ENCODE measurements at regions of chr10 and their contacts with region 1.

Region 1: GRCh38 chr10:24408365-24408764 is 199.4 kb downstream of the KIAA1217 start:
- DNase-seq: no peak
- ATAC-seq: no peak
- H3K4me3 ChIP-seq: no peak overlapping the region
- H3K27ac ChIP-seq: no peak overlapping the region
- H3K4me1 ChIP-seq: no peaks in the 10 kb centered on the region
- H3K27me3 ChIP-seq: no peaks in the 10 kb centered on the region
- CTCF ChIP-seq: no peak

Region 2: DNA sequence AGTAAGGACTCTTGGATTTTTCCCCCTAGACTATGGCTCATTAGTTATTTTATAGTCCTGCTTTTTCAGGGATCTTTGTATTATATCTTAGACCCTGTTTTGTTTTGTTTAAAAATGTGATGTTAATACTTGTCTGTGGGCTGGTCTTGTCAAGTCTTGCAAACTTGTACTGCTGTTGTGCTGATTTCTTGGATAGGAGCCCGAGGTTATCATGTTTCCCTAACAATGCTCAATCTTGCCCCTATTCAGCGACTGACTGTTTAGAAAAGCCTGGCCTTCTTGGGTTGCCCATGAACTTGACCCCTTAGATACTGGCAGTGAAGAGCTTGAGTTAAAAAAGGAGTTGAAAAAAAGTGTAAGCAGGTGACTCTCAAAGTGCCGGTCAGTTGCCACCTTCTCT is 83.7 kb before region 1 on chr10:
- CTCF ChIA-PET with region 1: no interaction called
- POLR2A ChIA-PET with region 1: no interaction called
- in situ Hi-C with region 1: no loop called
- intact Hi-C with region 1: no loop called
- DNase-seq: no peak
- ATAC-seq: no peak
- H3K4me3 ChIP-seq: no peak overlapping the region
- H3K27ac ChIP-seq: no peak overlapping the region
- H3K4me1 ChIP-seq: no peaks in the 10 kb centered on the region
- H3K27me3 ChIP-seq: no peaks in the 10 kb centered on the region
- CTCF ChIP-seq: no peak

Region 3: GRCh38 chr10:24393201-24393600 is 15.2 kb before region 1 on chr10:
- CTCF ChIA-PET with region 1: no interaction called
- POLR2A ChIA-PET with region 1: no interaction called
- in situ Hi-C with region 1: no loop called
- intact Hi-C with region 1: no loop called
- DNase-seq: no peak
- ATAC-seq: no peak
- H3K4me3 ChIP-seq: no peak overlapping the region
- H3K27ac ChIP-seq: no peak overlapping the region
- H3K4me1 ChIP-seq: no peaks in the 10 kb centered on the region
- H3K27me3 ChIP-seq: no peaks in the 10 kb centered on the region
- CTCF ChIP-seq: no peak

Region 4: DNA sequence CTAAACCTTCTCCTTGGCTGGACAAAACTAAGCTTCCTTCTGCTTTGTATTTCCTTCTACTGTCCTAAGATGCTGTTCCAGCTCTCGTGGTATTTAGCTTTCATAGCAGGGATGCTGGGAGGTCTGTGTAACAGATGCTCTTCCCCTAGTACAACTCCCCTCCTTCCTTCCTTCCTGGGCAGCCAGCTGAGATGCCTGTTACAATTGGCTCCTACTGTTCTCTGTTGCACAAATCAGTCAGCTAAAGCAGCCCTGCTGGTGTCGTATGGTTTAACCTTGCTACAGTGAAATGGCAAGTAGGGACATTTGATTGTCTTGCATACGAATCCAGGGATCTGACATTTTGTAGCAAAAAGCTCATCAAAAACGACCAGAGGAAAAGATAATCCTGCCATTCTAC is 171.5 kb after region 1 on chr10:
- CTCF ChIA-PET with region 1: no interaction called
- POLR2A ChIA-PET with region 1: no interaction called
- in situ Hi-C with region 1: no loop called
- intact Hi-C with region 1: no loop called
- DNase-seq: no peak
- ATAC-seq: no peak
- H3K4me3 ChIP-seq: no peak overlapping the region
- H3K27ac ChIP-seq: no peak overlapping the region
- H3K4me1 ChIP-seq: no peaks in the 10 kb centered on the region
- H3K27me3 ChIP-seq: no peaks in the 10 kb centered on the region
- CTCF ChIP-seq: no peak

Region 5: GRCh38 chr10:24690961-24691512 is 282.7 kb after region 1 on chr10:
- CTCF ChIA-PET with region 1: no interaction called
- POLR2A ChIA-PET with region 1: no interaction called
- in situ Hi-C with region 1: no loop called
- intact Hi-C with region 1: no loop called
- DNase-seq: no peak
- ATAC-seq: no peak
- H3K4me3 ChIP-seq: no peak overlapping the region
- H3K27ac ChIP-seq: no peak overlapping the region
- H3K4me1 ChIP-seq: no peaks in the 10 kb centered on the region
- H3K27me3 ChIP-seq: no peaks in the 10 kb centered on the region
- CTCF ChIP-seq: no peak

Region 6: DNA sequence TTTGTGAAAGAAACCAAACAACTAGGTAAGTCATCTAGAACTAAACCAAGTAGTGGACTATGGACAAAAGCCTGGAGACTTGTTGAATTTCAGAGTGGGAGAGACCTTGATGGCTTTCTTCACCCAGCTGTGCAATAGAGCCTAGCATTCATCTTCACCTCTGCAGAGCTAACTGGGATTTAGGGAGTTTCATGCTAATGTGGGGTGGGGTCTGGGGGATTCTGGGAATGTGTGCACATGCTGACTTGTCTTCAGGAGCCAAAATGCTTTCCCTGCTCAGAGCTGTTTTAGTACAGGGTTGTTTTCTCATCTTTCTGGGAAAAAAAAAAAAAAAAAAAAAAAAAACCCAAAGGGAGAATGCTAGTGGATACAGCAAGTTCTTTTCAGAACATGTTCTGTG is 396.6 kb after region 1 on chr10:
- CTCF ChIA-PET with region 1: no interaction called
- POLR2A ChIA-PET with region 1: interaction called, 21 read pairs
- in situ Hi-C with region 1: no loop called
- intact Hi-C with region 1: no loop called
- DNase-seq: no peak
- ATAC-seq: no peak
- H3K4me3 ChIP-seq: no peak overlapping the region
- H3K27ac ChIP-seq: no peak overlapping the region
- H3K4me1 ChIP-seq: no peaks in the 10 kb centered on the region
- H3K27me3 ChIP-seq: no peaks in the 10 kb centered on the region
- CTCF ChIP-seq: no peak

Region 7: GRCh38 chr10:25065761-25066476 is 657.6 kb after region 1 on chr10:
- CTCF ChIA-PET with region 1: interaction called, 19 read pairs
- POLR2A ChIA-PET with region 1: no interaction called
- in situ Hi-C with region 1: no loop called
- intact Hi-C with region 1: no loop called
- DNase-seq: no peak
- ATAC-seq: no peak
- H3K4me3 ChIP-seq: no peak overlapping the region
- H3K27ac ChIP-seq: no peak overlapping the region
- H3K4me1 ChIP-seq: peaks cover 8% of the 10 kb centered on the region; the same call in 1 of the 2 replicates
- H3K27me3 ChIP-seq: no peaks in the 10 kb centered on the region
- CTCF ChIP-seq: no peak

Measured in Panc1 (cell line).